H1 (cell line): ENCODE measurements at regions of chr14 and their contacts with region 1.

Region 1: DNA sequence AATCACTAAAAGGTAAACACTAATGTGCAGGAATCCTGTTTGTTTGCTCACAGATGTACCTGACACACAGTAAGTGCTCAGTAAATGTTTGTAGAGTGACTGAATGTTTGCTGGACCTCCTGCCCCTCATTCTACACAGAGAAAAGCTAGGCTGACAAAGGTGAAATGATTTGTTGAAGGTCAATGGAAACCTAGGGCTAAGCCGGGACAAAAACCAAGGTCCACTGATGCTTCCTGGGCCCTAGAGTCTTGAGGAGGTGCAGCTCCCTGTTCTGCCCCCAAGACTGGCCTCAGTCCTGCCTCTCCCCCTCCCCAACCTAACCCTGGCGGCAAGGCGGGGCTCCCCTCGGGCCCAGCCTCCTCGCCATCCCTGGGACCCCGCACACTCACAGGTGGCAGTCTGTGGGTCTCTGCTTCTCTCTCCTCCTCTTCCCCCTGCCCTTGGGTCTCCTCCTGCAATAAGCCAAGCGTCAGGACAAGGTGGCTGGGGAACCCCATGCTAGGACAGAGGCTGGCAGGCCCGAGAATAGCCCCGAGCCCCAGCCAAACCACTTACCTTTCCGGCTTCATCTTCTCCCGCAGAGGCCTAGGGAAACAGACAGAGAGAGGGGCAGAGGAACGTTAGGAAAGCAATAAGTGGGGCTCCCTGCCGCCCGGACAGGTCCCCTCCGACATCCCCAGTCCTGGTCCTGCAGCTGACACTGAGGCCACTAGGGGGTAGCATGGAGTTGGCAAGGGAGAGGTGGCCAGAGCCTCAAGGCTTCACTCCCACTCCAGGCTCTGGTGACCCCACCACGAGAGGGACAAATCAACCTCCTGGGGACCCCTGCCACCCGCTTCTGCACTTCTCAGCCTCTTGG is 9.3 kb downstream of the PGF start:
- DNase-seq: peak; percentile 41 to 95
- H3K4me3 ChIP-seq: no peak overlapping the region
- H3K27ac ChIP-seq: no peak overlapping the region
- H3K4me1 ChIP-seq: peaks cover 0 to 6% (median 2%) of the 10 kb centered on the region in 4 experiments; a peak in 3 of 7 replicates
- H3K27me3 ChIP-seq: no peaks in the 10 kb centered on the region
- CTCF ChIP-seq: peak in 2 of 3 experiments; percentile 93 to 97; a peak in 3 of 4 replicates
- EP300 ChIP-seq: no peak
- POLR2A ChIP-seq: 0 out of 3 replicates have a peak, but pooled peaks of 1 of the 2 experiments have one; percentile 54
- RAD21 ChIP-seq: peak; percentile 85 to 91

Region 2: GRCh38 chr14:74807853-74808545 is 138.1 kb before region 1 on chr14:
- CTCF ChIA-PET with region 1: no interaction called
- POLR2A ChIA-PET with region 1: no interaction called
- DNase-seq: no peak
- H3K4me3 ChIP-seq: no peak overlapping the region
- H3K27ac ChIP-seq: no peak overlapping the region
- H3K4me1 ChIP-seq: no peaks in the 10 kb centered on the region
- H3K27me3 ChIP-seq: no peaks in the 10 kb centered on the region
- CTCF ChIP-seq: no peak
- EP300 ChIP-seq: no peak
- POLR2A ChIP-seq: no peak
- RAD21 ChIP-seq: no peak

Region 3: GRCh38 chr14:74932401-74932901 is 13.6 kb before region 1 on chr14:
- CTCF ChIA-PET with region 1: interaction called, 62 read pairs
- POLR2A ChIA-PET with region 1: interaction called, 4 read pairs
- DNase-seq: no peak
- H3K4me3 ChIP-seq: no peak overlapping the region
- H3K27ac ChIP-seq: no peak overlapping the region
- H3K4me1 ChIP-seq: peaks cover 0 to 5% (median 0%) of the 10 kb centered on the region in 4 experiments; a peak in 1 of 7 replicates
- H3K27me3 ChIP-seq: no peaks in the 10 kb centered on the region
- CTCF ChIP-seq: no peak
- EP300 ChIP-seq: no peak
- POLR2A ChIP-seq: no peak
- RAD21 ChIP-seq: no peak

Region 4: GRCh38 chr14:74973003-74973653 is 27.1 kb after region 1 on chr14:
- CTCF ChIA-PET with region 1: interaction called, 33 read pairs
- POLR2A ChIA-PET with region 1: interaction called, 3 read pairs
- DNase-seq: no peak
- H3K4me3 ChIP-seq: no peak overlapping the region
- H3K27ac ChIP-seq: no peak overlapping the region
- H3K4me1 ChIP-seq: peaks cover 5 to 14% (median 9%) of the 10 kb centered on the region in 4 experiments; a peak in 6 of 7 replicates
- H3K27me3 ChIP-seq: 0 out of 7 replicates have a peak, but pooled peaks cover 0 to 2% (median 0%) of the 10 kb centered on the region in 4 experiments
- CTCF ChIP-seq: no peak
- EP300 ChIP-seq: no peak
- POLR2A ChIP-seq: no peak
- RAD21 ChIP-seq: no peak

Region 5: DNA sequence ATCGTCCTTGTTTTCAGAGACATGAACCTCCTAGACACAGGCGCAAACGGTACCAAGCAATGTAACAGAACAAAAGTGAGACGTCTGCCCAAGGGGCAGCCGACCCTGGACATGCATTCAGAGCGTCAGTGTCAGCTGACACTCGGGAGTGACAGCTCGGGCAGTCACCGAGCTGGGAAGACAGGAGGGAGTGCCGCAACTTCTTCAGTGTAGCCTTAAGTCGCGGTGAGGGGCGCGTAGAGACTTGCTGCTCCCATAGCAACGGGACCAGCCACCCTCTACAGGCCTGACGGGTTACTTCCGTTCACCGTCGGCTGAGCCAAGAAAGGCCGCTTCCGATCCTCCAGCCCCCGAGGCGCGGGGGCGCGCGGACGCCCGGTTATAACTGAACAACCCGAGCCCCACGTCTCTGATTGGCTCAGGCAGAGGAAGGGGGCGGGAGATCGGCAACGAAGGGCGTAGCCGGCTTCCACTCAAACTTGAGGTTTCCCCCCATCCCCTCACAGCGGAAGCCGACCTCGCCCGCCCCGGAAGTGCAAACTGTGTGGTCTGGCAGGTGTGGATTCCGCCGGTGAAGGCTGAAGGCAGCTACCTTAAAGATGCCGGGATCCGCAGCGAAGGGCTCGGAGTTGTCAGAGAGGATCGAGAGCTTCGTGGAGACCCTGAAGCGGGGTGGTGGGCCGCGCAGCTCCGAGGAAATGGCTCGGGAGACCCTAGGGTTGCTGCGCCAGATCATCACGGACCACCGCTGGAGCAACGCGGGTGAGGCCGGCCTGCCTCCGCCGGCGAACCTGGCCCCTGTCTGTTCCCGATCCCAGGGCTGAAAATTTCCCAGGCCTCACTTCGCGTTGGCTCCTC is 56.6 kb after region 1 on chr14 and contains the start of gene EIF2B2:
- CTCF ChIA-PET with region 1: interaction called, 29 read pairs
- POLR2A ChIA-PET with region 1: interaction called, 3 read pairs
- DNase-seq: peak; percentile 95 to 98
- H3K4me3 ChIP-seq: peak within 1 kb of the TSS; percentile 73 to 99 (median 95)
- H3K27ac ChIP-seq: peak within 1 kb of the TSS; percentile 20; the same call in 1 of the 2 replicates
- H3K4me1 ChIP-seq: peaks cover 0 to 5% (median 4%) of the 10 kb centered on the region in 4 experiments; a peak in 4 of 7 replicates
- H3K27me3 ChIP-seq: no peaks in the 10 kb centered on the region
- CTCF ChIP-seq: peak in 2 of 3 experiments; percentile 14 to 18; a peak in 2 of 4 replicates
- EP300 ChIP-seq: no peak
- POLR2A ChIP-seq: peak in 1 of 2 experiments; percentile 39; a peak in 2 of 3 replicates
- RAD21 ChIP-seq: peak; percentile 47 to 50
- total RNA-seq, gene EIF2B2: 42.6 and 51.4 TPM in 2 replicates

Region 6: GRCh38 chr14:75050852-75051554 is 105.0 kb after region 1 on chr14 and contains the start of gene MLH3:
- CTCF ChIA-PET with region 1: interaction called, 17 read pairs
- POLR2A ChIA-PET with region 1: no interaction called
- DNase-seq: peak; percentile 87 to 91
- H3K4me3 ChIP-seq: peak within 1 kb of the TSS; percentile 54 to 61 (median 58)
- H3K27ac ChIP-seq: peak within 1 kb of the TSS; percentile 67
- H3K4me1 ChIP-seq: peaks cover 0 to 4% (median 0%) of the 10 kb centered on the region in 4 experiments; a peak in 3 of 7 replicates
- H3K27me3 ChIP-seq: no peaks in the 10 kb centered on the region
- CTCF ChIP-seq: no peak
- EP300 ChIP-seq: no peak
- POLR2A ChIP-seq: peak; percentile 71 to 89
- RAD21 ChIP-seq: no peak
- total RNA-seq, gene MLH3: 19.1 and 20.1 TPM in 2 replicates